ENCODE measurements at regions of chr14 and their contacts with region 1.

Region 1: GRCh38 chr14:22872033-22872832 is 693 bp downstream of the LRP10 start:
- DNase-seq: peak; percentile 87
- H3K4me3 Mint-ChIP-seq: peak overlapping the region; percentile 91
- H3K27ac Mint-ChIP-seq: peak overlapping the region; percentile 100
- H3K4me1 Mint-ChIP-seq: peaks cover 29% of the 10 kb centered on the region
- H3K27me3 Mint-ChIP-seq: no peaks in the 10 kb centered on the region

Region 2: GRCh38 chr14:22545842-22546721 is 326.2 kb before region 1 on chr14:
- CTCF ChIA-PET with region 1: no interaction called
- intact Hi-C with region 1: no loop called
- DNase-seq: peak; percentile 64
- H3K4me3 Mint-ChIP-seq: peak overlapping the region; percentile 67
- H3K27ac Mint-ChIP-seq: peak overlapping the region; percentile 98
- H3K4me1 Mint-ChIP-seq: peaks cover 91% of the 10 kb centered on the region
- H3K27me3 Mint-ChIP-seq: no peaks in the 10 kb centered on the region

Region 3: DNA sequence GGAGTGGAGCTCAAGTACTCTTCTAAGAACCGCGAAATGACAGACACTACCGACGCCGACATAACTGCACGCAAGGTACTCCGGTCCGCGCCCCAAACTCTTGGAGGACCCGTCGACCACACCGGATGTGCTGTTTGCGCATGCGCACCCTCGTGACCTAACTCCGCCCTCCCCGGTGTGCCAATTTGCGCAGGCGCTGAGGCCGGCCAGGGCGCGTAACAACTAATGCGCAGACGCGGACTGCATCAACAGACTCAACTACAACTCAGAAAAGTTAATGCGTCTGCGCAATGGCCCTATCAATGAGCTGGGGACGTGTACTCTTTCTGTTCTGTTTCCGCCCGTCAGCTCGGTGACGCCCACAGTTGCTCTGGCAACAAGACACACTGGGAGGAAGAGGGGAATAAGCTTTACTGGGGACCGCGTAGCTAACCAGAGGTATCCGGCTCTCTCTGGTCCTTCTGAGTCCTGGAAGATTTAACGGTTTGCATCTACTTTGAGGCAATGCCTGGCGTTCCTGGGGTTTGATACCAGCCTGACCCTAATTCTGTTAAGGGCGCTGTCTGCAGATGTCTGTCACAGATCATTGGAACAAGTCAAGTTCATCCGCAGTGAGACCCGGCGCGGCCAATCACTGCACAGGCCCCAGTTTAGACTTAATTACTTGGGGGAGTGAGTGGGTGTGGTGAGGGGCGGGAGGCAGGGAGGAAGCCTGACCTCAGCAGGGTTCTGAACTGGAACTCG is 283.0 kb before region 1 on chr14 and contains the start of gene DAD1:
- CTCF ChIA-PET with region 1: no interaction called
- intact Hi-C with region 1: loop called (anchors 1 kb)
- DNase-seq: peak; percentile 100
- H3K4me3 Mint-ChIP-seq: peak within 1 kb of the TSS; percentile 98
- H3K27ac Mint-ChIP-seq: peak within 1 kb of the TSS; percentile 99
- H3K4me1 Mint-ChIP-seq: peaks cover 68% of the 10 kb centered on the region
- H3K27me3 Mint-ChIP-seq: no peaks in the 10 kb centered on the region
- total RNA-seq, gene DAD1: 219 to 226 TPM

Region 4: DNA sequence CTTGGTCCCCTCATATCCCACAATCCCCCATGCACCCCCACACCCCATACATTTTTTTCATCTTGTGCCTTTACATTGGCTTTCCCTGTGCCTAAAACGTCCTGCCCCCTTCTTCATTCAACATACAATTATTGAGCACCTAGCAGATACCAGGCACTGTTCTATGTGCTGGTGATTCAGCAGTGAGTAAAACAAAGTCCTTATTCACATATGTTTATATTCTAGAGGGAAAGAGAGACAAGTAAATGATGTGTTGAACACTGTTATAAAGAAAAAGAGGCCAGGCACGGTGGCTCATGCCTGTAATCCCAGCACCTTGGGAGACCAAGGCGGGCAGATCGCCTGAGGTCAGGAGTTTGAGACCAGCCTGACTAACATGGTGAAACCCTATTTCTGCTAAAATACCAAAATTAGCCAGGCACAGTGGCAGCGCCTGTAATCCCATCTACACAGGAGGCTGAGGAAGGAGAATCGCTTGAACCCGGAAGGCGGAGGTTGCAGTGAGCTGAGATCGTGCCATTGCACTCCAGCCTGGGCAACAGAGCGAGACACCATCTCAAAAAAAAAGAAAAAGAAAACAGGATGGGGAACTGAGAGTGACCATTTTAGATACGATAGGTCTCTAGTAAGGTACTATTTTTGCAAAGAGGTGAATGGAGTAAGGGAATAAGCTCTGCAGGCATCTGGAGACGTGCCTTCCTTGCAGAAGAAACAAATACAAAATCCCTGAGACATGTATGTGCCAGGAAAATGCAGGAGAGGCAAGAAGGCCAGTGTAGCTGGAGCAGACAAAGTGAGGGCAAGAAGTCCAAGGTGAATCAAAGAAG is 69.2 kb before region 1 on chr14:
- CTCF ChIA-PET with region 1: no interaction called
- intact Hi-C with region 1: no loop called
- DNase-seq: no peak
- H3K4me3 Mint-ChIP-seq: no peak overlapping the region
- H3K27ac Mint-ChIP-seq: no peak overlapping the region
- H3K4me1 Mint-ChIP-seq: no peaks in the 10 kb centered on the region
- H3K27me3 Mint-ChIP-seq: peaks cover 9% of the 10 kb centered on the region

Region 5: DNA sequence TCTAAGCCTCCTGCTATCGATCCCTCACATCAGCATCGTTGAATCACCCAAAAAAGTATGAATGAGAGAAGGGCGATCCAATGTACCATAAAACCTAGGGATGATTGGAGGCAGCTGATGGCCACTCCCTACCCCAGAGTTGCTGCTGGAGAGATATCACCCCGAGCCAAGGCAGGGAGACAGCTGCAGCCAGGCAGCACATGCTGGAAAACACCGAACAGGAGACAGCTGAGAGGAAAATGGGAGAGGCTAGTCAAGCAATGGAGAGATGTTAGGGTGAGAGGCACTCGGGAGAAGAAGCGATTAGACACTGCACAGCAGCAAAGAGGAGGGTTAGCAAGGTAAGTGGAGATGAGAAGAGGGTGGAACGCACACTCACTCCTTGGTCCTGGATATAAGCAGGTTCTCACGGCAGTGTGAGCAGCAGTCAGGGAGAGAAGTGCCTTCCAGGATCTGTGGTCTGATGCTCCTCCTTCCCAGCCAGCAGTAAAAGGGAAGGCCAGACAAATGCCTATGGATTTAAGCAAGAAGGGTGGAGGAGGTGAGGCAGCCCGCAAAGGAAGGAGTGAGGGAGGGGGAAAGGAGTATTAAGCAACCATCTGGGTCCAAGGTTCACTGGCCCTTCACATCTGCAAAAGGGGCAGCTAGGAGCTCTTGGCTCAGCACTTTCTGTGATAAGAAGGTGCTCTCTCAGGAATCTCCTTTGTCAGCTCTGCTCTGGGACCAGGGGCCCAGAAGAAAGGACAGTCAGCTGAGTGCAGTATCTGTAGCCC is 57.1 kb before region 1 on chr14 and contains the start of gene SLC7A7:
- CTCF ChIA-PET with region 1: no interaction called
- intact Hi-C with region 1: no loop called
- DNase-seq: no peak
- H3K4me3 Mint-ChIP-seq: no peak within 1 kb of the TSS
- H3K27ac Mint-ChIP-seq: no peak within 1 kb of the TSS
- H3K4me1 Mint-ChIP-seq: peaks cover 23% of the 10 kb centered on the region
- H3K27me3 Mint-ChIP-seq: peaks cover 1% of the 10 kb centered on the region
- total RNA-seq, gene SLC7A7: 0.40 to 1.1 TPM

Region 6: GRCh38 chr14:22829661-22830442 is 42.4 kb before region 1 on chr14 and contains the start of gene MRPL52:
- CTCF ChIA-PET with region 1: interaction called, 7 read pairs
- intact Hi-C with region 1: loop called (anchors 1 kb)
- DNase-seq: peak; percentile 94
- H3K4me3 Mint-ChIP-seq: peak within 1 kb of the TSS; percentile 94
- H3K27ac Mint-ChIP-seq: peak within 1 kb of the TSS; percentile 97
- H3K4me1 Mint-ChIP-seq: peaks cover 34% of the 10 kb centered on the region
- H3K27me3 Mint-ChIP-seq: no peaks in the 10 kb centered on the region
- total RNA-seq, gene MRPL52: 170 TPM

Region 7: DNA sequence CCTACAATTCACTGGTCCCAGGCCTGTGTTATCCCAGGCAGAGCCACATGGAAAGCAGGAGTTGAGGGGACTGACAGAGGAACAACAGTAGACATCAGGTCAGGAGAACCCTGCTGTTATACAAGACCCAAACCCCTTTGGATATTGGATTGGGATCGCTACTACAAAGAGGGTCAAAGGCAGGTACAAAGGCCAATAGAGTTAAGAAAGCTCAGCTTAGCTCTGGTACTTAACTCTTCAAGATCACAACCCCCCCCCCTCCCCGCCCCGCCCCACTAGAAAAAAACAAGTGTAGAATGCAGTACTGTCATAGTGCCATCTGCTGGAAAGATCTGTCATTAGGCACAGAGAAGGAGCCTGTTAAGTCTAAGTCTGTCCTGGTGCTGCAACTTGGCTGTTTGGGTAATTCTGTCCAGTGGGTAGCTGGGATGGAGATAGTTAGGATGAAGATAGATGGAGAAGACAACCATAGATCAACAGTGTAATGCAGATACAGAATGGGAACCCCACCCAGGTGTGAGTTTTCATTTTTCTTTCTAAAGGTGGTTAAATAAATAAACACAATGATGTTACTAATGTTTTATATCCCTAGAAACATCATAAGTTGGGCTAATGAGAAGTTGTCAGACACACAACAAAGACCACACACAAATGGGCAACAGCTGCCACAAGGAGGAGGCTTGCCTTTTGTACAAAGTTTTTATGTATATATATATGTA is 28.0 kb after region 1 on chr14:
- CTCF ChIA-PET with region 1: interaction called, 80 read pairs
- intact Hi-C with region 1: loop called (anchors 1 kb)
- DNase-seq: peak; percentile 64
- H3K4me3 Mint-ChIP-seq: no peak overlapping the region
- H3K27ac Mint-ChIP-seq: no peak overlapping the region
- H3K4me1 Mint-ChIP-seq: peaks cover 12% of the 10 kb centered on the region
- H3K27me3 Mint-ChIP-seq: no peaks in the 10 kb centered on the region

Region 8: GRCh38 chr14:22955702-22956569 is 83.7 kb after region 1 on chr14:
- CTCF ChIA-PET with region 1: interaction called, 3 read pairs
- intact Hi-C with region 1: loop called (anchors 1 kb)
- DNase-seq: no peak
- H3K4me3 Mint-ChIP-seq: peak overlapping the region; percentile 89
- H3K27ac Mint-ChIP-seq: peak overlapping the region; percentile 84
- H3K4me1 Mint-ChIP-seq: peaks cover 22% of the 10 kb centered on the region
- H3K27me3 Mint-ChIP-seq: no peaks in the 10 kb centered on the region

Region 9: DNA sequence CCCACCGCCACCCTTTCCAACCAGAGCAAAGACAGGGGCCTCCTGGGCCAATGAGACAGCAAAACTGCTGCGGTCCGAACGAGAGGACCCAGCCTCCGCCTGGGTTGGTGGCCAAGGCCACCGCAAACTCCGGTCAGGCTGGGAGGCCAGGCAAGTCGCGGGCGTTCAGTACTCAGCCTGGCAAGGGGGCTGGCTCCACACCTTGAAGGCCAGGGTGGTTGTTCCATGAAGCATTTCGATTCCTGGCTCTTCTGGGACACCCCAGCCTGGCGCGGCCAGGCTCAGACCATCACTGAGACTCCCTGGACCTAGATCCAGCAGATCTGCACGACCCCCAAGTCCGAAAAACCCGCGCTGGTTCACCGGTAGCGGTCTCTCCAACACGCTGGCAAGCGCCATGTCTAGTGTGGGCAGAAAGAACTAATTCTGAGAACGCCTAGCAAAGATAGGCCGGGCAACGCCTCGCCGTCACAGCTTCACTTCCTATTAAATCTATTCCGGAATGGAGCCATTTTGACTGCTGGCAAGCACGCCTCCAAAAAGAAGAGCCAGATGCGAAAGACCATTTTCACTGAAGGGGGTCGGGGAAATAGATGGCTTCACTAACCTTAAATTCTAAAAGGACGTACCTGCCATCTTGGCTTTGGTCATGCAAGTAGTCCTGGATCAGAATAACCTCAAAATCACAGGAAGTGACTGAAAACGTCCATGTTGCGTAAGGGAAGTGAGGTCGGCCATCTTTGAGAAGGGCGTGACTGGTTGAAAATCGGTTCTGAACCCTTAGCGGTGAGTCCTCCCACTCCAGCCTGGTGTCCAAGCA is 162.5 kb after region 1 on chr14 and contains the start of gene PSMB5:
- CTCF ChIA-PET with region 1: no interaction called
- intact Hi-C with region 1: loop called (anchors 2 kb)
- DNase-seq: peak; percentile 96
- H3K4me3 Mint-ChIP-seq: peak within 1 kb of the TSS; percentile 88
- H3K27ac Mint-ChIP-seq: peak within 1 kb of the TSS; percentile 96
- H3K4me1 Mint-ChIP-seq: peaks cover 34% of the 10 kb centered on the region
- H3K27me3 Mint-ChIP-seq: no peaks in the 10 kb centered on the region
- total RNA-seq, gene PSMB5: 120 to 125 TPM

Region 10: GRCh38 chr14:23352511-23353432 is 480.5 kb after region 1 on chr14 and contains the start of gene SLC22A17:
- CTCF ChIA-PET with region 1: no interaction called
- intact Hi-C with region 1: no loop called
- DNase-seq: peak; percentile 72
- H3K4me3 Mint-ChIP-seq: peak within 1 kb of the TSS; percentile 71
- H3K27ac Mint-ChIP-seq: no peak within 1 kb of the TSS
- H3K4me1 Mint-ChIP-seq: peaks cover 6% of the 10 kb centered on the region
- H3K27me3 Mint-ChIP-seq: peaks cover 4% of the 10 kb centered on the region
- total RNA-seq, gene SLC22A17: 3.5 to 4.8 TPM